A673 (cell line): ENCODE measurements at regions of chr13 and their contacts with region 1.

Region 1: DNA sequence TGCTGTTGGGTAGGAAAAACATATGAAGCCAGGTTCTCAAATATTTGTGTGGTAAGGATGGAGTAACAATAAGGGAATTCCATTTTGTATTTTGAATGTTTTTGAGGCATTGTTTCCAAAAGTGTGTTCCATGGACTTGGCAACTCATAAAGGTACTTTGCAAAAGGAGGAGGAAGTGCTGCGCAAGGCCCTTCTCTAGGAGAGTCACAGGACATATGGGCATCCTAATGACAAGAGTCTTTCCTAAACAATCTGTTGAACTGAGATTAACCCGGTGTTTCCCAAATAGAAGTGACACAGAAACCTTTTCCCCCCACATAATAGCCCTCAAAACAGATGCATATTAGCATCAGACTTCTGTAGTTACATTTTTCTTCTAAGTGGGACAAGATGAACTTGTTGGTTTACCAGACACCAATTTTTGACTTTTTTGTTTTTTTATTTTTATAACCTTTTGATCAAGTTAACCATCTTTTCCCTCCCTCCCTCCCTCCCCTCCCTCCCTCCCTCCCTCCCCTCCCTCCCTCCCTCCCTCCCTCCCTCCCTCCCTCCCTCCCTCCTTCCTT is 209.3 kb downstream of the PCCA start:
- DNase-seq: peak; percentile 95
- H3K4me3 ChIP-seq: no peak overlapping the region
- H3K27ac ChIP-seq: peak overlapping the region; percentile 98
- H3K4me1 ChIP-seq: peaks cover 84% of the 10 kb centered on the region
- H3K27me3 ChIP-seq: no peaks in the 10 kb centered on the region
- CTCF ChIP-seq: no peak

Region 2: GRCh38 chr13:99656092-99656745 is 642.0 kb before region 1 on chr13:
- CTCF ChIA-PET with region 1: interaction called, 7 read pairs
- POLR2A ChIA-PET with region 1: interaction called, 5 read pairs
- intact Hi-C with region 1: loop called (anchors 1 kb)
- DNase-seq: peak; percentile 89
- H3K4me3 ChIP-seq: peak overlapping the region; percentile 49
- H3K27ac ChIP-seq: peak overlapping the region; percentile 90
- H3K4me1 ChIP-seq: peaks cover 41% of the 10 kb centered on the region
- H3K27me3 ChIP-seq: no peaks in the 10 kb centered on the region
- CTCF ChIP-seq: peak; percentile 95

Region 3: DNA sequence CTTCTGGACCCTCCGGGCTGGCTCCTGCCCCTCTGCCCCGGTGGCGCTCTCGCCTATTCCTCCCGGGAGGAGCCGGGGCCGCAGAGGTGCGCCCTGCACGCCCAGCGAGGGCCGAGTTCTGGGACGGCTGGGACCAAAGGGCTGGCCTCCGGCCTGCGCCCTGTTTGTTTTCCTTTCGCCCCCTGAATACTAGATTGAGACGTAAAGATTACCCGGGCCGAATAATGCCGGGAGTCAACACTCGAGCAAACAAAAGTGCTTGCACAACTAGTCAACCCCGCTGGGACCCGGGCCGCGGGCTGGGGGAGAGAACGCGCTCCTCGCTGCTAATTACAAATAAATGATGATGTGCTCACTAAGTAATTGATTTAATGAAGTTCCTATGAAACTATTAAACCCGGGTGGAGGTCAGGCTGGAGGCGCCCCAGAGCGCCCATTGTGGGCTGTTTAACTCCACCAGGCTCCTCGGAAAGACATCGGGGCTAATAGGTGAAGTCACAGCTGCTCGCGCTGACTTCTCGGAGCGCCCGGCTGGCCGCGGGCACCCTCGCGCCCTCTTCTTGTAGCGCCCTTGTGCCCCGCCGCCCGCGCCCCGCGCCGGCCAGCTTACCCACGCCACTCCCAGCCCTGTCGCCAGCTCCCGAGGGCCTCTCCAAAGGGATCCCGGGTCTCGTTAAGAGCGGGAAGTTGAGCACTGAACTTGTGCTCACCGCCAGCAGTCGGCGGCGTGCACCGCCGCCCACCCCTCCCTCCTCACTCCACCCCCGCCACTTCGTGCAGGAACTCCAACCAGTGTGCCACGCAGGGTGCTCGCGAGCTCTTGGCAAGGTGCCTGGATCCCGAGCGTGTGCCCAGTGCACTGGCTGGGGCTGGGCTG is 341.5 kb before region 1 on chr13:
- CTCF ChIA-PET with region 1: interaction called, 20 read pairs
- POLR2A ChIA-PET with region 1: no interaction called
- intact Hi-C with region 1: no loop called
- DNase-seq: peak; percentile 78
- H3K4me3 ChIP-seq: peak overlapping the region; percentile 48
- H3K27ac ChIP-seq: peak overlapping the region; percentile 71
- H3K4me1 ChIP-seq: peaks cover 19% of the 10 kb centered on the region
- H3K27me3 ChIP-seq: no peaks in the 10 kb centered on the region
- CTCF ChIP-seq: peak; percentile 29

Region 4: GRCh38 chr13:99980201-99980823 is 317.9 kb before region 1 on chr13:
- CTCF ChIA-PET with region 1: no interaction called
- POLR2A ChIA-PET with region 1: interaction called, 11 read pairs
- intact Hi-C with region 1: no loop called
- DNase-seq: peak; percentile 96
- H3K4me3 ChIP-seq: peak overlapping the region; percentile 95
- H3K27ac ChIP-seq: peak overlapping the region; percentile 97
- H3K4me1 ChIP-seq: peaks cover 5% of the 10 kb centered on the region
- H3K27me3 ChIP-seq: no peaks in the 10 kb centered on the region
- CTCF ChIP-seq: no peak

Region 5: GRCh38 chr13:100088644-100089464 is 209.3 kb before region 1 on chr13 and contains the start of gene PCCA:
- CTCF ChIA-PET with region 1: no interaction called
- POLR2A ChIA-PET with region 1: no interaction called
- intact Hi-C with region 1: no loop called
- DNase-seq: peak; percentile 92
- H3K4me3 ChIP-seq: peak within 1 kb of the TSS; percentile 83
- H3K27ac ChIP-seq: peak within 1 kb of the TSS; percentile 56
- H3K4me1 ChIP-seq: no peaks in the 10 kb centered on the region
- H3K27me3 ChIP-seq: no peaks in the 10 kb centered on the region
- CTCF ChIP-seq: no peak
- total RNA-seq, gene PCCA: 93.0 and 105 TPM in 2 replicates

Region 6: DNA sequence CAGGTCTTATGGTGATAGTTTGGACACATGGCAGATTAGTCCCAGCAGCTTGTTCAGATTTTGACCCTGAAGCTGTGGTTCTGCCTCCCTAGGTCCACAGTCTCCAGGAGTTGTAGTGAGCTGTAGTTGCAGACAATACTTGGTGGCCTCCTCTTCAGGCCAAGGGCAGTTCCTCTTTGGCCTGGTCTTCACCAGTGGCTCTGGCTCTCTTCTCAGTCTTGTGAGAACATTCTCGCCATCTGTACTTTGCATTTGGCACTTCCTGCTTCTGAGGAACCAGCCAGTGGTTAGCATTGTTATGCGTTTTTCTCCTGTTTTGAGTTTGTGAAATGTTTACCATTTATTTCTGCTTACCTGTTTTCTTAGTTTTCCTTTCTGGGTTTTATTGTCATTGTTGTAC is 168.6 kb before region 1 on chr13:
- CTCF ChIA-PET with region 1: no interaction called
- POLR2A ChIA-PET with region 1: no interaction called
- intact Hi-C with region 1: loop called (anchors 5 kb)
- DNase-seq: no peak
- H3K4me3 ChIP-seq: no peak overlapping the region
- H3K27ac ChIP-seq: no peak overlapping the region
- H3K4me1 ChIP-seq: peaks cover 13% of the 10 kb centered on the region
- H3K27me3 ChIP-seq: no peaks in the 10 kb centered on the region
- CTCF ChIP-seq: no peak

Region 7: DNA sequence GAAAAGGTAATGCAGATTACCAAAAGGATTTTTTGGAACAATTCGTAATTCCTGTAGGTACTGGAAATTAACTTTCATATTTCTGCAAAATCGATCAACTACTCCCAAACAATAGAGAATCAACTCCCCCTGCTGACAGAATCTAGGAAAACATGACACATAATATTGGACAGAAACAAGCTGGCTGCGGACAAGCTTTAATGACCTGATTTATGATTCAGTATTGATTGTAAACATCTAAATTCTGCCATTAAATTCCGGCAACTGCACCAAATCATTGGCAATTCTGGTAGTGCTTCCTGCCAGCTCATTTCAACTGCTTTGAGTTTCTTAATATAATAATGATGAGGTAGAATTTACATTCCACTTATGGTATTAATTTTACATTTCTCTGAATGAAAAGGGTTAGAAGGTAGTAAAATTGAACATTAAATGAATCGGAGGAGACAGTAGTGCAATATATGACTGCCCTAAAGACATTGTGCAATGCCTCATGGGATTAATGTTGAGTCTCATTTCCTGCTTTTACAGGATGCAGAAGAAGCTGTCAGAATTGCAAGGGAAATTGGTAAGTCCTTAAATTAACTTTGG is 62.8 kb before region 1 on chr13:
- CTCF ChIA-PET with region 1: interaction called, 7 read pairs
- POLR2A ChIA-PET with region 1: interaction called, 10 read pairs
- intact Hi-C with region 1: loop called (anchors 1 kb)
- DNase-seq: peak; percentile 99
- H3K4me3 ChIP-seq: peak overlapping the region; percentile 27
- H3K27ac ChIP-seq: peak overlapping the region; percentile 82
- H3K4me1 ChIP-seq: peaks cover 59% of the 10 kb centered on the region
- H3K27me3 ChIP-seq: no peaks in the 10 kb centered on the region
- CTCF ChIP-seq: peak; percentile 73

Region 8: GRCh38 chr13:100588331-100589177 is 290.4 kb after region 1 on chr13 and contains the start of gene GGACT:
- CTCF ChIA-PET with region 1: no interaction called
- POLR2A ChIA-PET with region 1: no interaction called
- intact Hi-C with region 1: no loop called
- DNase-seq: peak; percentile 79
- H3K4me3 ChIP-seq: peak within 1 kb of the TSS; percentile 58
- H3K27ac ChIP-seq: peak within 1 kb of the TSS; percentile 82
- H3K4me1 ChIP-seq: peaks cover 14% of the 10 kb centered on the region
- H3K27me3 ChIP-seq: no peaks in the 10 kb centered on the region
- CTCF ChIP-seq: peak; percentile 58
- total RNA-seq, gene GGACT: 3.6 and 3.8 TPM in 2 replicates

Region 9: DNA sequence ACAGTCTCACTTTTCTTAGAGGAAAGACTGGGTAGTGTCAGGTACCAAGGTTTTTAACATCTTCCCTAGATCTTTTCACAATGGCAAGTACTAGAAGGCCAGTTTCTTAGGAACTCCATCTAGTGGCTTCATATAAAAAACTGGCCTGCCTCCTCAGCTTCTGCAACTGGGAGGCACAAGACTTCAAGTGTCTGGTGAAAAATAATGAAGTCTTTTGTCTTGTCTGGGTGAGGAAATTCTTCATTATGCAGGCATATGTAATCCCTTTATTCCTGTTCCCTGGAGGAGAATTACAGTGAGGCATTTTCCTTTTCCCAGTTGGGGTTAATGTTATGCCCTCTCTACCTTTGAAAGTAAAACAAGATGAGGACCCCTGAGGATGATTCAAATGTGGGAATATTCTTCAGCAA is 817.6 kb after region 1 on chr13:
- CTCF ChIA-PET with region 1: no interaction called
- POLR2A ChIA-PET with region 1: no interaction called
- intact Hi-C with region 1: loop called (anchors 5 kb)
- DNase-seq: peak; percentile 92
- H3K4me3 ChIP-seq: no peak overlapping the region
- H3K27ac ChIP-seq: no peak overlapping the region
- H3K4me1 ChIP-seq: peaks cover 25% of the 10 kb centered on the region
- H3K27me3 ChIP-seq: peaks cover 8% of the 10 kb centered on the region
- CTCF ChIP-seq: peak; percentile 60